Adrenal gland (tissue), 19 donors: ENCODE measurements at regions of chr1 and their contacts with region 1.

Region 1: GRCh38 chr1:8374812-8375211 is 56.9 kb downstream of the SLC45A1 start:
- DNase-seq: peak in 4 of 7 donors; percentile 21 to 67 (median 36)
- H3K4me3 ChIP-seq: no peak overlapping the region
- H3K27ac ChIP-seq: peak overlapping the region; percentile 88 to 96 (median 92)
- H3K4me1 ChIP-seq: peaks cover 44 to 87% of the 10 kb centered on the region in 2 donors
- H3K27me3 ChIP-seq: no peaks in the 10 kb centered on the region
- CTCF ChIP-seq: peak in 5 of 6 experiments; percentile 21 to 46 (median 31)
- POLR2A ChIP-seq: no peak

Region 2: GRCh38 chr1:8423650-8424538 is 49.1 kb after region 1 on chr1:
- intact Hi-C with region 1: loop called in 1 of 2 experiments (anchors 5 kb)
- DNase-seq: peak; percentile 54 to 75 (median 59)
- H3K4me3 ChIP-seq: peak overlapping the region; percentile 53 to 95 (median 72)
- H3K27ac ChIP-seq: peak overlapping the region; percentile 93 to 98 (median 97)
- H3K4me1 ChIP-seq: peaks cover 28 to 59% of the 10 kb centered on the region in 2 donors
- H3K27me3 ChIP-seq: no peaks in the 10 kb centered on the region
- CTCF ChIP-seq: peak in 3 of 6 experiments; percentile 16 to 36 (median 34)
- POLR2A ChIP-seq: peak; percentile 14 to 75

Region 3: GRCh38 chr1:8439015-8439702 is 64.3 kb after region 1 on chr1:
- intact Hi-C with region 1: no loop called
- DNase-seq: peak; percentile 62 to 87 (median 81)
- H3K4me3 ChIP-seq: no peak overlapping the region
- H3K27ac ChIP-seq: peak overlapping the region in 4 of 5 donors; percentile 22 to 69 (median 54)
- H3K4me1 ChIP-seq: peaks cover 22 to 25% of the 10 kb centered on the region in 2 donors
- H3K27me3 ChIP-seq: no peaks in the 10 kb centered on the region
- CTCF ChIP-seq: peak in 2 of 6 experiments; percentile 9 to 27
- POLR2A ChIP-seq: no peak